Calu3 (cell line): ENCODE measurements at regions of chr1 and their contacts with region 1.

Region 1: DNA sequence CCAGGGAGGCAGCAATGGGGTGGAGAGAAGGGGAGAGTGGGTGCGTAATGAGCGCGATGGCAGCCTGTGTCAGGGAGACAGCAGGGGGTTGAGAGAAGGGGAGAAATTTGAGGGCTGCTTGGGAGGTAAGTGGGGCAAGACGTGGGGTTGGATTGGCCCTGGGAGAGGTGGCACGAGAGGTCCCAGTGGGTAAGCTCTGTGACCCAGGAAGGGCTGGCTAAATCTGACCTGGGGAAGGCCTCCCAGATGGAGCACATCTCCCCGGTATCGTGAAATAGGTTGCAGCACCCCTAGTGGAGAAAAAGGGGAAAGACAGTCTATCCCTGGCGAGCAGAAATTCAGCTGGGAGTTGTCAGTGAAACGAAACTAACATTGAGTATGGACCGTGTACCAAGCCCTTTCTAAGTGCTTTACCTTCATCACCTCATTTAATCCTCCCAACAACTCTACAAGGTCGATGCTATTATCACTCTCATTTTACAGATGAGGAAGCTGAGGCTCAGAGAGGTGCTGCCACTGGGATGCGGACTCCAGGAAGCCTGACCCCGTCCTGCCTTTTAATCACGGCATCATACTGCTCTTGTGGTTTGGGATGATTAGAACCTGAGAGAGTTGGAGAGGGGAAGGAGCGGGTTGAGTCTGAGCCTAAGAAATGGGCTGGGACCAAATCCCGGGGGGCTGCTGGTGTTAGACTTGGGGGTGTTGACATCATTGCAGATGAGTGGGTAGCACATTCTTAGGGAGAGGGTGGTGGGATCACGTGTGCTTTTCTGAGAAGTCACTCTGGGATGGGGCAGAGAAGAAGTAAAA is 56.6 kb upstream of the RPL11 start:
- DNase-seq: peak; percentile 56
- H3K4me3 Mint-ChIP-seq: peak overlapping the region; percentile 55
- H3K27ac Mint-ChIP-seq: no peak overlapping the region
- H3K4me1 Mint-ChIP-seq: peaks cover 23% of the 10 kb centered on the region
- H3K27me3 Mint-ChIP-seq: peaks cover 25% of the 10 kb centered on the region
- CTCF ChIP-seq: peak; percentile 55

Region 2: GRCh38 chr1:23496490-23497181 is 138.4 kb before region 1 on chr1:
- CTCF ChIA-PET with region 1: interaction called, 13 read pairs
- intact Hi-C with region 1: no loop called
- DNase-seq: no peak
- H3K4me3 Mint-ChIP-seq: no peak overlapping the region
- H3K27ac Mint-ChIP-seq: no peak overlapping the region
- H3K4me1 Mint-ChIP-seq: no peaks in the 10 kb centered on the region
- H3K27me3 Mint-ChIP-seq: peaks cover 13% of the 10 kb centered on the region
- CTCF ChIP-seq: no peak

Region 3: DNA sequence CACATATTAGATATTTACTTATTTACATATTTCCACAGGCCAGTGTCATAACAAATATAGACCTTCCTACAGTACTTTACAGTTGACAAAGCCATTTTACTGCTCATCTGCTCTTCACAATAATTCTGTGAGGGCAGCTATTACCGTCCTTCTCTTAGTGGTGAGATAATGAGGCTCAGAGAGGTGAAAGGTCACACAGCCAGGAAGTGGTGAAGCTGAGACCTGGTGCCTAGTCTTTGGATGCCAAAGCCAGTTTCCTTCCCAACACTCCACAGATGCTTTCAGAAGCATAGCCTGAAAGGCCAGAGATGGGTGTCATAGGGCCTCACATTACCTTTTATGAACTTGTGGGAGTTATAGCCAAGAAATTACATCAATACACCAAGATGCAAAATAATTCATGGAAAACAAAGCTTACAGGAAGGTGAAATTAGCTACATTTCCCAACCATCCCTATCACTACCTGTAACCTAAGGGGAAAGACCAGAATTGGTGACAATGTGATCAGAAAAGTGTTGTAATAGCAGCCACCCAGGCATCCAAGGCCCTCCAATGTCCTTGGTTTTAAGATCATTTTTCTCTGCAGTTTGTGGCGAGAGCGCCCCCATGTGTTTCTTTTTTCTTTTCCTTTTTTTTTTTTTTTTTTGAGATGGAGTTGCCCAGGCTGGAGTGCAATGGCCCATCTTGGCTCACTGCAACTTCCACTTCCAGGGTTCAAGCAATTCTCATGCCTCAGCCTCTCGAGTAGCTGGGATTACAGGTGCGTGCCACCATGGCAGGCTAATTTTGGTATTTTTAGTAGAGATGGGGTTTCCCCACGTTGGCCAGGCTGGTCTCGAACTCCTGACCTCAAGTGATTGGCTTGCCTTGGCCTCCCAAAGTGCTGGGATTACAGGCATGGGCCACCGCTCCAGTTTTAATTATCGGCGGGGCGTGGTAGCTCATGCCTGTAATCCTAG is 30.1 kb after region 1 on chr1:
- CTCF ChIA-PET with region 1: no interaction called
- intact Hi-C with region 1: no loop called
- DNase-seq: no peak
- H3K4me3 Mint-ChIP-seq: no peak overlapping the region
- H3K27ac Mint-ChIP-seq: no peak overlapping the region
- H3K4me1 Mint-ChIP-seq: no peaks in the 10 kb centered on the region
- H3K27me3 Mint-ChIP-seq: peaks cover 26% of the 10 kb centered on the region
- CTCF ChIP-seq: no peak